Posterior cingulate gyrus (tissue), 11 donors: ENCODE measurements at regions of chr19 and their contacts with region 1.

Region 1: DNA sequence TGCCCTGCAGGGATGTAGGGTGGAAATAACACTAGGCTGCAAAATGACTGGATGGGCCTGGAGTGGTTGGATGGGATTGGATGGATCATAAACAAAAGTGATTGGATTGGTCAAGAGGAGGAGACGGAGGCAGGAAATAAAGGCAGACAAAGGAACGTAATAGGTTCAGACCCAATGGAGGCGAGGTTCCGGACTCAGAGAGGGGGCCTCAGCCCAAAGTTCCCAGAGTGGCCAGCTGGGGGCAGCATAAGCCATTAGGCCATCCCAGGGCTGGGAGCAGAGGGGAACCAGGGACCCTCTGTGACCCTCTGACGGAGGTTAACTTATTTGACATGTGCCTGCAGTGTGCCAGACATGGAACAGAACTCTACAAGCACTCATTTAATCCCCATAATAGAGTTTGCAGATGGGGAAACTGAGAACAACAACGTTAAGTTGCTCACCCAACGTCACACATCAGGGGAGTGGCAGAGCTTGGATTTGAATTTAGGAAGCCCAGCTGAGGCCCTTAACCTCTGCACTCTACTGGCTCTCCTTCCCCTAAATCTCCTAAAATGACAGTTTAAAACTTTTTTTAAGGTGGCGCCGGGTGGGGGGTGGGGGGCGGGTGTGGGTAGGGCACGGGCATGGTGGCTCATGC is 15.3 kb upstream of the MAP1S start:
- DNase-seq: peak in 8 of 10 donors; percentile 64 to 92 (median 69)

Region 2: GRCh38 chr19:17576759-17577473 is 127.0 kb before region 1 on chr19:
- intact Hi-C with region 1: no loop called
- DNase-seq: peak in 1 of 10 donors; percentile 76

Region 3: GRCh38 chr19:17766543-17767131 is 62.7 kb after region 1 on chr19:
- intact Hi-C with region 1: loop called (anchors 1 kb)
- DNase-seq: peak in 9 of 10 donors; percentile 50 to 97 (median 80)

Region 4: GRCh38 chr19:17784201-17785008 is 80.5 kb after region 1 on chr19:
- intact Hi-C with region 1: loop called (anchors 5 kb)
- DNase-seq: peak in 8 of 10 donors; percentile 34 to 94 (median 75)

Region 5: GRCh38 chr19:17926044-17926443 is 222.1 kb after region 1 on chr19:
- intact Hi-C with region 1: no loop called
- DNase-seq: no peak